ENCODE measurements at regions of chr15 and their contacts with region 1.

Region 1: GRCh38 chr15:99059010-99059981 is 45.6 kb upstream of the SYNM start:
- DNase-seq: peak; percentile 84 to 91 (median 86)
- ATAC-seq: peak; percentile 85 to 94 (median 88)
- H3K4me3 ChIP-seq: peak overlapping the region; percentile 44 to 73 (median 62)
- H3K27ac ChIP-seq: peak overlapping the region; percentile 39 to 94 (median 79)
- H3K4me1 ChIP-seq: peaks cover 0 to 39% (median 18%) of the 10 kb centered on the region in 12 donors
- H3K27me3 ChIP-seq: peaks cover 0 to 13% (median 0%) of the 10 kb centered on the region in 9 donors
- CTCF ChIP-seq: peak; percentile 50 to 89 (median 78)
- POLR2A ChIP-seq: peak in 1 of 2 donors; percentile 35

Region 2: GRCh38 chr15:98800437-98801233 is 258.7 kb before region 1 on chr15:
- intact Hi-C with region 1: loop called in 1 of 10 experiments (anchors 10 kb)
- DNase-seq: peak in 3 of 5 donors; percentile 36 to 51 (median 38)
- ATAC-seq: peak; percentile 63 to 88 (median 84)
- H3K4me3 ChIP-seq: peak overlapping the region in 5 of 12 donors; percentile 2 to 28 (median 10)
- H3K27ac ChIP-seq: peak overlapping the region in 11 of 12 donors; percentile 11 to 70 (median 52)
- H3K4me1 ChIP-seq: peaks cover 6 to 67% (median 35%) of the 10 kb centered on the region in 12 donors
- H3K27me3 ChIP-seq: no peaks in the 10 kb centered on the region
- CTCF ChIP-seq: no peak
- POLR2A ChIP-seq: no peak

Region 3: DNA sequence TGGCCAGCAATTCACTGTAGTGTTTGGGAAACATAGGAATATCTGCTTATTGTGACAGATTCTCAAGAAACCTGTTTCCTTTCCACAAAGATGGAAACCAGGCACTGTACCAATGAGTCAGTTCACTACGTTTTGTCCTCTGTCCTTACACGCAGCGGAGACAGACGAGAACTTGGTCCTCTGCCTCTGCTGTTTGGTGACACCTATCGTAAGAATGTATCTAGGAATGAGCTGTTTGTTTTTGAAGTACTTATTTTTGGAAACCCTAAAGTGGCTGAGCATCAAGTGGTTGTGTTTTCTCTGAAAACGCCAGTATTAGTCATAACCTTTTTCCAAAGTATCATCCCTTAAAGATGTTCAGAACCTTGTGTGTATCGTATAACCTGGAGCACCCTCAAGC is 144.7 kb before region 1 on chr15:
- intact Hi-C with region 1: loop called in 1 of 10 experiments (anchors 10 kb)
- DNase-seq: no peak
- ATAC-seq: no peak
- H3K4me3 ChIP-seq: no peak overlapping the region
- H3K27ac ChIP-seq: peak overlapping the region in 1 of 12 donors; percentile 25
- H3K4me1 ChIP-seq: peaks cover 0 to 43% (median 15%) of the 10 kb centered on the region in 12 donors
- H3K27me3 ChIP-seq: no peaks in the 10 kb centered on the region
- CTCF ChIP-seq: no peak
- POLR2A ChIP-seq: no peak

Region 4: DNA sequence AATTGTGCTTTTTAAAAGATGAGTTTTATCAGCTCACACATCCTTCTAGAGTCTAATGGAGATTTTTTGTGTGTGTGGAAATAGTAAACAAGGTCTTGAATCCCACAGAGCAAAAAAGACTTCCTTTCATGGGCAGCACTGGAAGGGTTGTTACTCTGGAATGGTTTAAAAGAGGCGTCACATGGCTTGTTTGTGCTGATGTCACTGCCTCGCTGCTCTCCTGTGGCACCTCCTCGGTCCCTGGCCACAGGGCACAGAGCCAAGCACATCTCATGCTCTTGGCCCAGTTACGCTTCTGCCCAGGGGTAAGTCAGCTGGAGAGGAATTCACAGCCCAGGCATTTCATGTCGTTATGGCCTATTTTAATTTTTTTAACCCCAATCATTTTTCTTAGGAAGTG is 104.9 kb before region 1 on chr15:
- intact Hi-C with region 1: loop called in 7 of 10 experiments (anchors 5 to 10 kb)
- DNase-seq: peak; percentile 76 to 91 (median 85)
- ATAC-seq: peak; percentile 76 to 88 (median 85)
- H3K4me3 ChIP-seq: no peak overlapping the region
- H3K27ac ChIP-seq: peak overlapping the region; percentile 58 to 90 (median 81)
- H3K4me1 ChIP-seq: peaks cover 0 to 59% (median 34%) of the 10 kb centered on the region in 12 donors
- H3K27me3 ChIP-seq: no peaks in the 10 kb centered on the region
- CTCF ChIP-seq: no peak
- POLR2A ChIP-seq: no peak

Region 5: GRCh38 chr15:99014803-99015676 is 44.3 kb before region 1 on chr15:
- intact Hi-C with region 1: loop called in 2 of 10 experiments (anchors 5 kb)
- DNase-seq: peak; percentile 40 to 75 (median 46)
- ATAC-seq: peak; percentile 63 to 89 (median 87)
- H3K4me3 ChIP-seq: peak overlapping the region; percentile 11 to 74 (median 62)
- H3K27ac ChIP-seq: peak overlapping the region in 3 of 12 donors; percentile 23 to 60 (median 47)
- H3K4me1 ChIP-seq: peaks cover 0 to 20% (median 8%) of the 10 kb centered on the region in 12 donors
- H3K27me3 ChIP-seq: peaks cover 0 to 9% (median 0%) of the 10 kb centered on the region in 9 donors
- CTCF ChIP-seq: no peak
- POLR2A ChIP-seq: no peak

Measured in heart left ventricle (tissue), 16 donors.